OCI-LY7 (cell line): ENCODE measurements at regions of chr4 and their contacts with region 1.

Region 1: GRCh38 chr4:120718979-120719566 is 203.5 kb downstream of the PRDM5 start:
- DNase-seq: peak; percentile 82
- H3K4me3 ChIP-seq: peak overlapping the region; percentile 32
- H3K27ac ChIP-seq: peak overlapping the region; percentile 70
- H3K4me1 ChIP-seq: peaks cover 49% of the 10 kb centered on the region
- CTCF ChIP-seq: peak; percentile 98

Region 2: DNA sequence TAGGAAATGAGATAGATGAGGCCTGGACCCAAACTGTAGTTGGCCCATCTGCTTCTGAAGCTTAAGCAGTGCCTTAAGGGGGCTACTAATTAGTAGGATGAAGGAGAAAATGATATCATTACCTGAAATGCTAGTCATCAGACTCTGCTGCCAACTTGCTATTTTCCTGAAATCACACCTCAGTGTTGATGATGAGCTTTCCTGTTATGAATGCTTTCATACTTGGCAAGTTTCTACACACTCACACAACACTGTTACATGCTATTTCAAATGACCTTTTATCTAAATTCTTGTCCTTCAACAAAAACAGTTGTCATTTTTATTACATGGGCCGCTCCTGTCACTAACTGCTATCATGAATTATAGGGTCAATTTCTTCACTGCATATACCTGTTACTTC is 212.5 kb before region 1 on chr4:
- CTCF ChIA-PET with region 1: no interaction called
- POLR2A ChIA-PET with region 1: no interaction called
- intact Hi-C with region 1: no loop called
- DNase-seq: no peak
- H3K4me3 ChIP-seq: no peak overlapping the region
- H3K27ac ChIP-seq: no peak overlapping the region
- H3K4me1 ChIP-seq: no peaks in the 10 kb centered on the region
- CTCF ChIP-seq: no peak

Region 3: GRCh38 chr4:120557372-120557771 is 161.7 kb before region 1 on chr4:
- CTCF ChIA-PET with region 1: no interaction called
- POLR2A ChIA-PET with region 1: no interaction called
- intact Hi-C with region 1: no loop called
- DNase-seq: no peak
- H3K4me3 ChIP-seq: no peak overlapping the region
- H3K27ac ChIP-seq: no peak overlapping the region
- H3K4me1 ChIP-seq: no peaks in the 10 kb centered on the region
- CTCF ChIP-seq: no peak

Region 4: DNA sequence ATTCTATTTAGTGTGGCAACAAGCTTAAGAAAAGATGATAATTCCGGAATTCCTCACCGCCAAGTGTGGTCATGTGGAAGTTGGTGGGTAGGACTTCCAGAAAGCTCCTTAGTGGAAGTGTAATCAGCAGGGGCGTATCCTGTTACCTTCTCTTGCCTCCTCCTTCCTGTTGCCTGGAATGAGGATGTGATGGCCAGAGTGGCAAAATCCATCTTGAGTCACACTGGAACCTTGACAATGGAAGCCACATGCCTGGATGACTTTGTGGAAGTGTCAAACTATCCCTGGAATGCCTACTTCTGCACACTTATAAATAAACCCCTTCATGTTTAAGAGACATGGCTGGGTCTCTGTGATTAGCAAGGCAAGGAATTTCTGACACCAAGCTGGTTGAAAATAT is 12.5 kb after region 1 on chr4:
- CTCF ChIA-PET with region 1: interaction called, 6 read pairs
- POLR2A ChIA-PET with region 1: interaction called, 11 read pairs
- intact Hi-C with region 1: no loop called
- DNase-seq: no peak
- H3K4me3 ChIP-seq: no peak overlapping the region
- H3K27ac ChIP-seq: no peak overlapping the region
- H3K4me1 ChIP-seq: peaks cover 17% of the 10 kb centered on the region
- CTCF ChIP-seq: no peak

Region 5: DNA sequence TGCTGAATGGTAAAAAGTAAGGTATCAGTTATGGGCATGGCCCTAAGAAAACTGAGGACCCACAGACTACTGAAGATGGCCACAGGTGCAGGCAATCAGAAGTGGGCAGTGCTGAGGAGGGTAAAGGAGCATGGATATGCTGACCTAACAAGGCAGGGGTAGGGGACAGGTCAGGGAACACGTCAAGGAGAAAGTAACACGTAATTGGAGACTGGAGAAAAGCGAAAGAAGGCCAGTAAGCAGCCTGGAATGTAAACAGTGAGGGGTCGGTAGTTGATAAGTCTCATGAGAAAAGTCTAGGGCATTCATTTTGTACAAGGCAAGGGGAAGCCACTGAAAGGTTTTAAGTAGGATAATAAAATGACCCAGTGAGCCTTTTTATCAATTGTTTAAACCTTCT is 50.2 kb after region 1 on chr4:
- CTCF ChIA-PET with region 1: interaction called, 6 read pairs
- POLR2A ChIA-PET with region 1: interaction called, 24 read pairs
- intact Hi-C with region 1: loop called (anchors 2 kb)
- DNase-seq: no peak
- H3K4me3 ChIP-seq: no peak overlapping the region
- H3K27ac ChIP-seq: no peak overlapping the region
- H3K4me1 ChIP-seq: peaks cover 44% of the 10 kb centered on the region
- CTCF ChIP-seq: no peak

Region 6: DNA sequence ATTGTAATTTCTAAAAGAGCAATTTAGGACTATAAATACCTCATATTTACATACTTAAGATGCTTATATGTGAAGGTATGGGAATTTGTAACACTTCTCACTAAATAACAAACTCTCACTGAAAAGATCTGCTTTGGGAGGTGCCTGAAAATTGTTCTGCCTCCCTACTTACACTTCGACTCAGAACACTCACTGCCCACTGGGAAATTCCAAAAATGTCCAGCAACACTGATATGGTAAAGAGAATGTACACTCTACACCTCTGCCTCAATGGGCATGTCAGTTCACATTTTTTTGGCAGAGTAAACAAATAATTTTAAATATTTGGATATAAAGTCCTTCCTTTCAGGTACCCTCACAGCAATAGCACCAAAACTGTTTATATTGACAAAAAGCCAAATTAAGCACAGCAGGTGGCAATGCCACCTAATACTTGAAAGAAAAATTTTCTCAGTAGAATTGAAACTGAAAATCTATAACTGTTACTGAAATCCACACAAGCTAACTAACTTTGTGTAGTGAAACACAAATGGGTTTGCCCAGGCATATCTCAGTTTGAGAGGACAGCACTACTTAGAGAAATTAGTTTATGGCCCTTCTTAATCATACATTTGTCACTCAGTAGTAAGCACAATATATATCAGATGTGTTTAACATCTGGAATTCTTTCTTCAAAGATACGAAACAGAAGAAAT is 136.4 kb after region 1 on chr4:
- CTCF ChIA-PET with region 1: interaction called, 3 read pairs
- POLR2A ChIA-PET with region 1: interaction called, 3 read pairs
- intact Hi-C with region 1: loop called (anchors 1 kb)
- DNase-seq: peak; percentile 30
- H3K4me3 ChIP-seq: no peak overlapping the region
- H3K27ac ChIP-seq: no peak overlapping the region
- H3K4me1 ChIP-seq: peaks cover 33% of the 10 kb centered on the region
- CTCF ChIP-seq: no peak

Region 7: GRCh38 chr4:120918788-120919187 is 199.7 kb after region 1 on chr4:
- CTCF ChIA-PET with region 1: no interaction called
- POLR2A ChIA-PET with region 1: interaction called, 4 read pairs
- intact Hi-C with region 1: loop called (anchors 2 kb)
- DNase-seq: no peak
- H3K4me3 ChIP-seq: no peak overlapping the region
- H3K27ac ChIP-seq: no peak overlapping the region
- H3K4me1 ChIP-seq: peaks cover 5% of the 10 kb centered on the region
- CTCF ChIP-seq: no peak

Region 8: GRCh38 chr4:121050300-121050699 is 331.2 kb after region 1 on chr4:
- CTCF ChIA-PET with region 1: no interaction called
- POLR2A ChIA-PET with region 1: no interaction called
- intact Hi-C with region 1: loop called (anchors 5 kb)
- DNase-seq: peak; percentile 6
- H3K4me3 ChIP-seq: no peak overlapping the region
- H3K27ac ChIP-seq: no peak overlapping the region
- H3K4me1 ChIP-seq: no peaks in the 10 kb centered on the region
- CTCF ChIP-seq: peak; percentile 63